Naive thymus-derived CD4-positive, alpha-beta T cell (primary cell): ENCODE measurements at regions of chr2 and their contacts with region 1.

Region 1: GRCh38 chr2:207625018-207625907 is at the start of gene METTL21A:
- DNase-seq: peak; percentile 91 to 97 (median 95)
- ATAC-seq: peak; percentile 91
- H3K4me3 ChIP-seq: peak within 1 kb of the TSS; percentile 92
- H3K4me3 Mint-ChIP-seq: peak within 1 kb of the TSS; percentile 93 to 96 (median 94)
- H3K27ac ChIP-seq: peak within 1 kb of the TSS; percentile 99
- H3K27ac Mint-ChIP-seq: peak within 1 kb of the TSS; percentile 86 to 96 (median 95)
- H3K4me1 ChIP-seq: peaks cover 4 to 10% of the 10 kb centered on the region in 2 donors
- H3K4me1 Mint-ChIP-seq: peaks cover 32 to 52% (median 40%) of the 10 kb centered on the region in 7 donors
- H3K27me3 ChIP-seq: no peaks in the 10 kb centered on the region
- H3K27me3 Mint-ChIP-seq: peaks cover 0 to 2% (median 0%) of the 10 kb centered on the region in 5 donors
- total RNA-seq, gene METTL21A: 14.6 to 20.5 (median 19.6) TPM

Region 2: DNA sequence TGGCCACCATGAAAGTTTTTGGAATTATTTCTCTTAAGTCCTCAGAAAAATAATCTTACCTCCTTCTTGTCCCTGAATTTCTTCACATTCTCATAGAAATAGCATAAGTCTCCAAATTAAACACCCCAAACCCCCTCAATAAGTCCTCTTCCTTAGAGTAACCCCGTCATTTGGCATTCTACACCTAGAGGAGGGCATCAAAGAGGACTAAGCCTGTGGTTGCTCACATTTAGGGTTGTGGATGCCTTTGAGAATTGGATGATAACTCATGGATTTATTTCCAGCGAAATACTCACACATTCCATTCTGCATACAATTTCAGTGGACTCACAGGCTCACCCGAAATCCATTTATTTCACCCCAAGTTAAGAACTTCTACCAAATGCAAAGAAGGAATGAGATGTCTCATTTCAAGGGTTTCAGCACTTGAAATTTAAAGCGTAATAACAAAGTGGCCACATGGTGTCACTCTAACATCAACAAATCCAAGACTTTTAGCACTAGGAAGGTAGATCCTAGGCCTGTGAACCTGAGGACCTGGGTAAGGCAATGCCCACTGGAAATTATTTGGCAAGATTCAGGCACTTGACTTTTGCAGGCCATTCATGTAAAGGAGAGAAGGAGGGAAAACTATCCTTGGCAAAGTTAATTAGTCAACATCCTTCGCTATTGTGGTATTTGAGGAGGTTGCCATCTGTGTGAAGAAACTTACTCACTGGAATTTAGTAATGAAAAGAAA is 931.7 kb before region 1 on chr2:
- CTCF ChIA-PET with region 1: no interaction called
- POLR2A ChIA-PET with region 1: no interaction called
- intact Hi-C with region 1: loop called in 1 of 2 experiments (anchors 5 kb)
- DNase-seq: peak in 7 of 9 donors; percentile 11 to 56 (median 41)
- ATAC-seq: peak; percentile 75
- H3K4me3 ChIP-seq: no peak overlapping the region
- H3K4me3 Mint-ChIP-seq: no peak overlapping the region
- H3K27ac ChIP-seq: no peak overlapping the region
- H3K27ac Mint-ChIP-seq: no peak overlapping the region
- H3K4me1 ChIP-seq: no peaks in the 10 kb centered on the region
- H3K4me1 Mint-ChIP-seq: peaks cover 0 to 4% (median 0%) of the 10 kb centered on the region in 7 donors
- H3K27me3 ChIP-seq: no peaks in the 10 kb centered on the region
- H3K27me3 Mint-ChIP-seq: peaks cover 0 to 7% (median 0%) of the 10 kb centered on the region in 5 donors

Region 3: DNA sequence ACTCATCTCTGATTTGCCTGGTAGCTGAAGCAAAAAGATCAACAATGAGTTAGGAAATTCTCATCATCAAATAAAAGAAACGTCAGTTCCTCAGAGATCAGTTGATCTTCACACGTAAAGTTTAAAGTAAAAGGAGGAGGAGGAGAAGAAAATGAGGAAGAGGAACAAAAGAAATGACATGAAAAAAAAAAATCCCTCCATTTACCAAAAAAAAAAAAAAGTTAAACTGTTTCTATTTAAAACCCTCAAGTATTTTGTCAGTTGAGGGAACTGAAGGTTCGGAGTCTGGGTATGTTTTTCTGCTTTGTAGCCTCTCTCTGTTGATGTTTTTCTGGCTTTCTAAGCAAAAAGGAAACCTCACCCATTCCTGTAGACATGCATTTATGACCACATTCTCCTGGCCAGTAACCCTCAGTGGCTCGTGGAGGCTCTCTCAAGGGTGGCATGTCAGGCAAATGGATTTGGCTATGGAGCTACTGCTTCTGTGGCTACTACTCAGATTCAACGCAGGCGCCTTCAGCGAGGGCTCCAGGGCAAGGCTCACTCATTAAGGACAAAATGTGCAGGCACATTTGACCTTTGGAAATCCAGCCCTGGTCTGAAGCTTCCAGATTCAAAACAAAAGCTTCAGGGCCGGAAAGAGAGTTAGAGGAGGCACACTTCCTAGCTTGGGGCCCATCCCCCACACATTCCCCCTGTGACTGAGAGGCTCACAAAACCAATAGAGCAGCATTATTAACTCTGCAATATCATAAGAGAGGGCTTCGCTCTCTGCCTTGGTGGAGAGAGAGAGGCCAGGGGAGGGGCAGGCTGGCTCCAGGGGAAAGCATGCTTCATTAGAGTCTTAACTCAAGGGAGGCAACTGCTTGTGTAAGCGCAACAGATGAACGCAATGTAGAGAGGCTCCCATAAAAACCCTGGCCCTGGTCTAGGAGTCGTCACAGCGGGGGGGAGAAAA is 481.8 kb before region 1 on chr2:
- CTCF ChIA-PET with region 1: no interaction called
- POLR2A ChIA-PET with region 1: interaction called, 4 read pairs
- intact Hi-C with region 1: loop called in 1 of 2 experiments (anchors 1 kb)
- DNase-seq: peak; percentile 34 to 92 (median 83)
- ATAC-seq: peak; percentile 83
- H3K4me3 ChIP-seq: peak overlapping the region; percentile 57
- H3K4me3 Mint-ChIP-seq: peak overlapping the region; percentile 59 to 90 (median 80)
- H3K27ac ChIP-seq: peak overlapping the region; percentile 86
- H3K27ac Mint-ChIP-seq: peak overlapping the region; percentile 92 to 99 (median 96)
- H3K4me1 ChIP-seq: peaks cover 17 to 51% of the 10 kb centered on the region in 2 donors
- H3K4me1 Mint-ChIP-seq: peaks cover 45 to 95% (median 87%) of the 10 kb centered on the region in 7 donors
- H3K27me3 ChIP-seq: no peaks in the 10 kb centered on the region
- H3K27me3 Mint-ChIP-seq: no peaks in the 10 kb centered on the region

Region 4: GRCh38 chr2:207710814-207711740 is 85.8 kb after region 1 on chr2 and contains the start of gene CCNYL1:
- CTCF ChIA-PET with region 1: interaction called, 5 read pairs
- POLR2A ChIA-PET with region 1: interaction called, 34 read pairs
- intact Hi-C with region 1: loop called (anchors 1 kb)
- DNase-seq: peak; percentile 93 to 98 (median 97)
- ATAC-seq: peak; percentile 98
- H3K4me3 ChIP-seq: peak within 1 kb of the TSS; percentile 88
- H3K4me3 Mint-ChIP-seq: peak within 1 kb of the TSS; percentile 94 to 99 (median 97)
- H3K27ac ChIP-seq: peak within 1 kb of the TSS; percentile 83
- H3K27ac Mint-ChIP-seq: peak within 1 kb of the TSS; percentile 83 to 98 (median 93)
- H3K4me1 ChIP-seq: peaks cover 4 to 11% of the 10 kb centered on the region in 2 donors
- H3K4me1 Mint-ChIP-seq: peaks cover 15 to 32% (median 27%) of the 10 kb centered on the region in 7 donors
- H3K27me3 ChIP-seq: no peaks in the 10 kb centered on the region
- H3K27me3 Mint-ChIP-seq: peaks cover 0 to 3% (median 0%) of the 10 kb centered on the region in 5 donors
- total RNA-seq, gene CCNYL1: 6.7 to 16.7 (median 10.7) TPM

Region 5: GRCh38 chr2:207769597-207770486 is 144.6 kb after region 1 on chr2 and contains the start of gene FZD5:
- CTCF ChIA-PET with region 1: no interaction called
- POLR2A ChIA-PET with region 1: no interaction called
- intact Hi-C with region 1: loop called (anchors 1 to 2 kb)
- DNase-seq: peak in 8 of 9 donors; percentile 29 to 92 (median 37)
- ATAC-seq: peak; percentile 91
- H3K4me3 ChIP-seq: peak within 1 kb of the TSS; percentile 63
- H3K4me3 Mint-ChIP-seq: peak within 1 kb of the TSS; percentile 87 to 98 (median 94)
- H3K27ac ChIP-seq: no peak within 1 kb of the TSS
- H3K27ac Mint-ChIP-seq: peak within 1 kb of the TSS in 4 of 9 donors; percentile 31 to 81 (median 66)
- H3K4me1 ChIP-seq: peaks cover 20 to 24% of the 10 kb centered on the region in 2 donors
- H3K4me1 Mint-ChIP-seq: peaks cover 9 to 37% (median 29%) of the 10 kb centered on the region in 7 donors
- H3K27me3 ChIP-seq: peaks cover 0 to 3% of the 10 kb centered on the region in 2 donors
- H3K27me3 Mint-ChIP-seq: peaks cover 14 to 64% (median 23%) of the 10 kb centered on the region in 5 donors
- total RNA-seq, gene FZD5: 0.13 to 0.93 (median 0.27) TPM

Region 6: GRCh38 chr2:208040199-208041171 is 415.2 kb after region 1 on chr2:
- CTCF ChIA-PET with region 1: no interaction called
- POLR2A ChIA-PET with region 1: no interaction called
- intact Hi-C with region 1: loop called in 1 of 2 experiments (anchors 1 kb)
- DNase-seq: peak; percentile 21 to 67 (median 54)
- ATAC-seq: peak; percentile 77
- H3K4me3 ChIP-seq: no peak overlapping the region
- H3K4me3 Mint-ChIP-seq: no peak overlapping the region
- H3K27ac ChIP-seq: no peak overlapping the region
- H3K27ac Mint-ChIP-seq: peak overlapping the region in 1 of 9 donors; percentile 25
- H3K4me1 ChIP-seq: no peaks in the 10 kb centered on the region
- H3K4me1 Mint-ChIP-seq: no peaks in the 10 kb centered on the region
- H3K27me3 ChIP-seq: no peaks in the 10 kb centered on the region
- H3K27me3 Mint-ChIP-seq: peaks cover 0 to 10% (median 5%) of the 10 kb centered on the region in 5 donors

Region 7: DNA sequence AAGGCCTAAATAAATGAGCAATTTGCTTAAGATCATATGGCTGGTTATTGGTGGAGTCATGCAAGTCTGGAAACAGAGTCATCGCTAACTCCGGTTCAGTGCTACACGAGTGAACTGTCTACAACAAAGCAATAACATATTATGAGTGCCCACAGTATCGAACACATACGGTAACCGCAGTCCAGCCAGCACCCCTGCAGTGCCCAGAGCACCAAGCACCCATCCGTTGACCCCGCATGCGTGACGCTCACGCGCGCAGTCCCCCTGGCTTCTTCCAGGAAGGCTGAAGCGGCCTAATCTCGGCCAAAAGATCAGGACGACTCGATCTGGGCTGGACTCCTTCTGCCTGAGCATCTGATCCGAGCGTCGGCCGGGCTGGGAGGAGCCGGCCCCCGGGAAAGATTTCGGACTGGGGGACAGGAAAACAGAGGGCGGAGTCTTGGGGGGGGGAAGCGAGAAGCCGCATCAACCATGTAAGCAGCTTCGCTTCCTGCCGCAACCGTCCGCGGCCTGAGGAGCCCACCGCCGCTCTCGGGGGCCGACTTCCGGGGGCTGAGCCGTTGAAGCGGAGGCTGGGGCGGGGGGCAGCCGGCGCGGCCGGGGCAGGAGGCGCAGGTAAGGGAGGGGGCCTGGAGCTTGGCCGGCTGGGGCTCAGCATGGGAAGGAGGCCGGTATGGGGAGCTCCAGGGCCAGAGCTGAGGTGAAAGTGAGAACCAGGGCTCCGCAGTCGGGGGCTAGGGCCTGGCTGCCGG is 640.7 kb after region 1 on chr2 and contains the start of gene PIKFYVE:
- CTCF ChIA-PET with region 1: no interaction called
- POLR2A ChIA-PET with region 1: no interaction called
- intact Hi-C with region 1: loop called (anchors 1 kb)
- DNase-seq: peak; percentile 63 to 87 (median 83)
- ATAC-seq: peak; percentile 94
- H3K4me3 ChIP-seq: peak within 1 kb of the TSS; percentile 97
- H3K4me3 Mint-ChIP-seq: peak within 1 kb of the TSS; percentile 90 to 99 (median 96)
- H3K27ac ChIP-seq: peak within 1 kb of the TSS; percentile 83
- H3K27ac Mint-ChIP-seq: peak within 1 kb of the TSS; percentile 87 to 98 (median 95)
- H3K4me1 ChIP-seq: peaks cover 12 to 16% of the 10 kb centered on the region in 2 donors
- H3K4me1 Mint-ChIP-seq: peaks cover 9 to 60% (median 53%) of the 10 kb centered on the region in 7 donors
- H3K27me3 ChIP-seq: no peaks in the 10 kb centered on the region
- H3K27me3 Mint-ChIP-seq: peaks cover 0 to 5% (median 0%) of the 10 kb centered on the region in 5 donors
- total RNA-seq, gene PIKFYVE: 33.4 to 52.3 (median 39.1) TPM